Astrocyte of the cerebellum (primary cell): ENCODE measurements at regions of chr5 and their contacts with region 1.

Region 1: GRCh38 chr5:611721-612486 is at the start of gene CEP72:
- DNase-seq: peak; percentile 44
- H3K4me3 ChIP-seq: peak within 1 kb of the TSS; percentile 68
- CTCF ChIP-seq: no peak

Region 2: DNA sequence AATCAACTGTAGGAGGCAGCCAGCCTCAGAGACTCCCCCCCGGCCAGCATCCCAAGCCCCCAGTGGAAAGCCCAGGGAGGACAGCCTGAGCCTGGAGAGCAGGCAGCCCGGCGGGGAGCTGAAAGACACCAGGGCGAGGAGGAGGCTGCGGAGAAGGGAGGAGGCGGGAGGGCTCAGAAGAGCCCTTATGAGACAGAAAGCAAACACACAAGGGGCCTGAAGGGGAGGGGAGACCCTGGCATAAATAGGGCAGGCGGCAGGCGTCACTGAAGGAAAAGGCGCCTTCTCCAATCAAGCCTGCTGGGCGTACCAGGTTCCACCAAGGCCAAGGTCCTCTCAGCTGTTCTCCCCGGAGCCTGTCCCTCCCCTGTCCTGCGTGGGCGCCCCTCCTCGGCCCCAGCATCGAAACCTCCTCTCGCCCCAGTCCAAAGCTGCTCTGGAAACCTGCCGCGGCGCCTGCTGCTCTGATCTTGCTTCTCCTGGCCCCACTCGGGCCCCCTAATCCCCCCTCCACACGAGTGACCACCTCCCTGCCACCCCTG is 88.9 kb before region 1 on chr5:
- in situ Hi-C with region 1: loop called (anchors 25 kb)
- DNase-seq: no peak
- H3K4me3 ChIP-seq: no peak overlapping the region
- CTCF ChIP-seq: no peak